Left ventricle myocardium inferior (tissue), 1 donor: ENCODE measurements at regions of chr11 and their contacts with region 1.

Region 1: GRCh38 chr11:95972060-95972459 is 48.2 kb upstream of the MTMR2 start:
- DNase-seq: no peak
- H3K4me3 ChIP-seq: no peak overlapping the region
- H3K27ac ChIP-seq: no peak overlapping the region
- H3K4me1 ChIP-seq: no peaks in the 10 kb centered on the region
- H3K27me3 ChIP-seq: no peaks in the 10 kb centered on the region
- CTCF ChIP-seq: no peak

Region 2: DNA sequence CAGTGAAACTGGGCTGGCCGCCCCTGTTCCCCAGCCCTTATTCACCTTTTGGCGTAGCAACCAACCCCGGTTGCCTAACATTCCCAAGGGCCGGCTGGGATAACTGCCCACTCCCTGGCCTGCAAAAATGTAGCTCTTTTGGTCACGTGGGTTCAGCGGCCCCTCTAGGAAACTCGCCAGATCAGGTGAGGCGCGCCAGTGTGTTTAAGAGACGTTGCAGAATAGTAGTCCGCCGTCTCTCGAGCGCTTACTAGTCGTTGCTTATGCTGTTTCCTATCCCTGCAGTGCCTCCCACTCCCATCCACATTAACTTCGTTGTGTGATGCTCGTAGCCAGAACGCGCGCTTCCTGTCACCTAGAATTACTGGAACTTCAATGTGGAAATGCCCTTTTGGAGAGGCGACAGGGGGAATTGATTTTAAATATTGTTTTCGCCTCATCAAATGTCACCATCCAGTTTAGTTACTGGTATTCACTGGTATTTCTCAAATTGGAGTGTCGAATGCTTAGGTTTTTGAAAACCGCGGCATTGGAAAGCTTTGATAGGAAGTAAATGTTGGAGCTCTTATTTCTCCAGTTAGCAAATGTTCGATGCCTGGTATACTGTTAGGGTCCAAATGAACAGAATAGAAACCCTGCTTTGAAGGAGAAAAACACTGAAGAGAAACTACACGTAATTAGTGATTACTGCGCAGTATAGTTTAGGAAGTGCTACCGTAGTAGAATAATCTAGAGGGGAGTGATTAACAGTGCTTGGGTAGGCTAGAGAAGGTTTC is 180.9 kb before region 1 on chr11:
- intact Hi-C with region 1: no loop called
- DNase-seq: peak; percentile 43
- H3K4me3 ChIP-seq: peak overlapping the region; percentile 87
- H3K27ac ChIP-seq: peak overlapping the region; percentile 98
- H3K4me1 ChIP-seq: peaks cover 50% of the 10 kb centered on the region
- H3K27me3 ChIP-seq: no peaks in the 10 kb centered on the region
- CTCF ChIP-seq: no peak

Region 3: DNA sequence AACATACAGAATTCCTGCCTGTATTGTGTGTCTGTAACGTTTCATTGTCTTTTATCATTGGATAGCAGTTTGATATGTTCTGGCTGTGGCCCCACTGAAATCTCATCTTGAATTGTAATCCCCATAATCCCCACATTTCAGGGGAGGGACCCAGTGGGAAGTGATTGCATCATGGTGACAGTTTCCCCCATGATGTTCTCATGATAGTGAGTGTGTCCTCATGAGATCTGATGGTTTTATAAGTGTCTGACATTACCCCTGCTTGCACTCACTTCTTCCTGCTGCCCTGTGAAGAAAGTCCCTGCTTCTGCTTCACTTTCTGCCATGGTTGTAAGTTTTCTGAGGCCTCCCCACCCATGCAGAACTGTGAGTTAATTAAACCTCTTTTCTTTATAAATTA is 28.5 kb before region 1 on chr11:
- intact Hi-C with region 1: loop called (anchors 2 kb)
- DNase-seq: no peak
- H3K4me3 ChIP-seq: no peak overlapping the region
- H3K27ac ChIP-seq: no peak overlapping the region
- H3K4me1 ChIP-seq: no peaks in the 10 kb centered on the region
- H3K27me3 ChIP-seq: no peaks in the 10 kb centered on the region
- CTCF ChIP-seq: no peak